Activated CD4-positive, alpha-beta T cell treated with anti-CD3 and anti-CD28 coated beads, Interleukin-2, amount 10 ng/mL, durations not matched to agents 24 days and 14 days (primary cell): ENCODE measurements at regions of chr14 and their contacts with region 1.

Region 1: DNA sequence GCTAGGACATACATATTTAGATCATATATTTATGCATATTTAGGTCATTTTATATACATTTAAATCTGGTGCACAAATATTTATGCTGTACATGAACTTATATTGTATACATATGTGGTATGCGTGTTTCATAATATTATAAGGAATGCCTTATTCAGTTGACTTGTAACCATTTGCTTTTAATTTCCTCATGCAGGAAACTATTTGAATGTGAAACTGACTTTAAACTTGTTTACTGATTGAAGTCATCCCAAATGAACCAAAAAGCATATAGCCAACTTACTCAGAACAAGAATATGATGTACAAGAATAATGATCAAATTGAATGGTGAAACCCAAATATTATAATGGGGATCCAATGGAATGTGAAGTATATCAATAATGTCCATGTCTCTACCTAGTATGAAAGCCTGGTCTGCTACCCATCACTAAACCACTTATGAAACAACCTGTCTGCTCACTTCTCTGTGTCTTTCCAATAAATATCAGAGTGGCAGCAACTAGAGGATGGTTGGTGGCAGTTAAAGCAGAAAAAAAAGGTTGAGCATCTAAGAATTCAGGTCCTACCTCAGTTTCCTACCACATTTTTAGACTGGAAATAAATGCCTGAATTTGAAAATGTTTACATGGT is 38.3 kb downstream of the RPS6KA5 start:
- DNase-seq: peak; percentile 82
- H3K4me3 Mint-ChIP-seq: peak overlapping the region; percentile 83
- H3K27ac Mint-ChIP-seq: peak overlapping the region; percentile 93
- H3K4me1 Mint-ChIP-seq: peaks cover 41% of the 10 kb centered on the region
- H3K27me3 Mint-ChIP-seq: no peaks in the 10 kb centered on the region

Region 2: GRCh38 chr14:91009501-91010152 is 12.5 kb before region 1 on chr14:
- intact Hi-C with region 1: loop called (anchors 2 kb)
- DNase-seq: peak; percentile 76
- H3K4me3 Mint-ChIP-seq: peak overlapping the region; percentile 55
- H3K27ac Mint-ChIP-seq: peak overlapping the region; percentile 74
- H3K4me1 Mint-ChIP-seq: peaks cover 38% of the 10 kb centered on the region
- H3K27me3 Mint-ChIP-seq: no peaks in the 10 kb centered on the region

Region 3: GRCh38 chr14:91038438-91038837 is 16.3 kb after region 1 on chr14:
- intact Hi-C with region 1: loop called (anchors 1 kb)
- DNase-seq: no peak
- H3K4me3 Mint-ChIP-seq: no peak overlapping the region
- H3K27ac Mint-ChIP-seq: peak overlapping the region; percentile 8
- H3K4me1 Mint-ChIP-seq: peaks cover 60% of the 10 kb centered on the region
- H3K27me3 Mint-ChIP-seq: no peaks in the 10 kb centered on the region

Region 4: GRCh38 chr14:91078095-91078737 is 56.1 kb after region 1 on chr14:
- intact Hi-C with region 1: loop called (anchors 1 kb)
- DNase-seq: peak; percentile 91
- H3K4me3 Mint-ChIP-seq: peak overlapping the region; percentile 45
- H3K27ac Mint-ChIP-seq: peak overlapping the region; percentile 61
- H3K4me1 Mint-ChIP-seq: peaks cover 36% of the 10 kb centered on the region
- H3K27me3 Mint-ChIP-seq: no peaks in the 10 kb centered on the region

Region 5: GRCh38 chr14:91114079-91115065 is 92.3 kb after region 1 on chr14:
- intact Hi-C with region 1: loop called (anchors 2 kb)
- DNase-seq: peak; percentile 93
- H3K4me3 Mint-ChIP-seq: peak overlapping the region; percentile 93
- H3K27ac Mint-ChIP-seq: peak overlapping the region; percentile 97
- H3K4me1 Mint-ChIP-seq: peaks cover 61% of the 10 kb centered on the region
- H3K27me3 Mint-ChIP-seq: no peaks in the 10 kb centered on the region

Region 6: GRCh38 chr14:91138511-91139359 is 116.6 kb after region 1 on chr14:
- intact Hi-C with region 1: no loop called
- DNase-seq: peak; percentile 88
- H3K4me3 Mint-ChIP-seq: no peak overlapping the region
- H3K27ac Mint-ChIP-seq: peak overlapping the region; percentile 42
- H3K4me1 Mint-ChIP-seq: peaks cover 48% of the 10 kb centered on the region
- H3K27me3 Mint-ChIP-seq: no peaks in the 10 kb centered on the region